HEK293 (cell line): ENCODE measurements at regions of chr20 and their contacts with region 1.

Region 1: DNA sequence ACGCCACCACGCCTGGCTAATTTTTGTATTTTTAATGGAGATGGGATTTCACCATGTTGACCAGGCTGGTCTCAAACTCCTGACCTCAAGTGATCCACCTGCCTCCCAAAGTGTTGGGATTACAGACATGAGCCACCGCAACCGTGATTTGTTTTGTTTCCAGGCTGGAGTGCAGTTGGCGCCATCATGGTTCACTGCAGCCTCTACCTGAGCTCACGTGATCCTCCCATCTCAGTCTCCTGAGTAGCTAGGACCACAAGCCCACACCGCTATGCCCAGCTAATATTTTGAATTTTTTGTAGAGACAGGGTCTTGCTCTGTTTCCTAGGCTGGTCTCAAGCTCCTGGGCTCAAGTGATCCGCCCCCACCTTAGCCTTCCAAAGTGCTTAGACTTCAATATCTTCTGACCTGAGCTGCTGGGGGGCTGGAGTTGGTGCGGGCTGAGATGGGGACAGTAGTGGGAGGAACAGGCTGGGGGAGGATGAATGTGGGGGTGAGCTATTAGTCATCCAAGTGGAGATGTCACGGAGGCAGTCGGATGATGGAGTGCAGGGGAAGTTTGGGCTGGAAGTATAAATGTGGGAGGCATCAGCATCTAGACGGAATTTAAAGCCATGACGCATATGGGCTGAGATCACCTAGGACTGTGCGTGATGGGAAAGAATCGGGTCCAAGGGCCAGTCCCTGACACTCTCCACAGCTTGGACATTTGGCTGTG is 23.1 kb upstream of the ZMYND8 start:
- H3K4me3 ChIP-seq: no peak overlapping the region
- H3K27ac ChIP-seq: no peak overlapping the region
- H3K4me1 ChIP-seq: no peaks in the 10 kb centered on the region
- CTCF ChIP-seq: no peak

Region 2: GRCh38 chr20:47196091-47197081 is 183.2 kb before region 1 on chr20:
- CTCF ChIA-PET with region 1: interaction called, 60 read pairs
- POLR2A ChIA-PET with region 1: no interaction called
- H3K4me3 ChIP-seq: no peak overlapping the region
- H3K27ac ChIP-seq: no peak overlapping the region
- H3K4me1 ChIP-seq: no peaks in the 10 kb centered on the region
- CTCF ChIP-seq: peak; percentile 80

Region 3: DNA sequence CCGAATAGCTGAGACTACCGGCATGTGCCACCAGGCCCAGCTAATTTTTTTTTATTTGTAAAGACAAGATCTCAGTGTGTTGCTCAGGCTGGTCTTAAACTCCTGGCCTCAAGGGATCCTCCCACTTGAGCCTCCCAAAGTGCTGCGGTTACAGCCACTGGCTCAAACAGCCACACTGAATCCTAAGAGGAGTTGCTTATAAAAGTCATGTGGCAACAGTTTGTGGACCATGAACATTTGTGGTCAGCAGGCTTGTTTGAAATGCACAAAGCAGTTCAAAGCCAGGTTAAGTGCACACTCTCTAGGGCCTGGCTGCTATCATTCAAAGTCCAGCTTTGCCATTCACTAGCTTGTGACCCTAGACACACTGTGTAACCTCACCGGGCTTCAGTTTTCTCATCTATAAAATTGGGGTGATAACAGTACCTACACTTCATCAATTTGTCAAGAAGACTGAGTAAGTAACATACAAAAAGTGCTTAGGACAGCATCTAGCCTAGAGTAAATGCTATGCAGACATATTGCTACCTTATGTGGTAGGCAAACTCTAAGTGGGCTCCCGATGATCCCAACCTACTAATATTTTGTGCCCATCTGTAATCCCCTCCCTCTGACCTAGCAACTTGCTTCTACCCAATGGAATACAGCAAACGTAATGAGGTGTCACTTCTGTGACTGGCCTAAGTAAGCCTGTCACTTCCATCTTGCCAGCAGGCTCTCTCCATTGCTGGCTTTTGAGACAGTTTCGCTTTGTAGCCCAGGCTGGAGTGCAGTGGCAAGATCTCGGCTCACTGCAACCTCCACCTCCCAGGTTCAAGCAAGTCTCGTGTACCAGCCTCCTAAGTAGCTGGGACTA is 146.0 kb before region 1 on chr20:
- CTCF ChIA-PET with region 1: interaction called, 13 read pairs
- POLR2A ChIA-PET with region 1: interaction called, 4 read pairs
- H3K4me3 ChIP-seq: no peak overlapping the region
- H3K27ac ChIP-seq: no peak overlapping the region
- H3K4me1 ChIP-seq: no peaks in the 10 kb centered on the region
- CTCF ChIP-seq: no peak

Region 4: GRCh38 chr20:47272893-47273590 is 106.5 kb before region 1 on chr20:
- CTCF ChIA-PET with region 1: interaction called, 355 read pairs
- POLR2A ChIA-PET with region 1: interaction called, 4 read pairs
- H3K4me3 ChIP-seq: no peak overlapping the region
- H3K27ac ChIP-seq: no peak overlapping the region
- H3K4me1 ChIP-seq: peaks cover 3% of the 10 kb centered on the region
- CTCF ChIP-seq: peak; percentile 58

Region 5: GRCh38 chr20:47321120-47321805 is 58.3 kb before region 1 on chr20:
- CTCF ChIA-PET with region 1: interaction called, 15 read pairs
- POLR2A ChIA-PET with region 1: no interaction called
- H3K4me3 ChIP-seq: no peak overlapping the region
- H3K27ac ChIP-seq: no peak overlapping the region
- H3K4me1 ChIP-seq: peaks cover 15% of the 10 kb centered on the region
- CTCF ChIP-seq: no peak

Region 6: DNA sequence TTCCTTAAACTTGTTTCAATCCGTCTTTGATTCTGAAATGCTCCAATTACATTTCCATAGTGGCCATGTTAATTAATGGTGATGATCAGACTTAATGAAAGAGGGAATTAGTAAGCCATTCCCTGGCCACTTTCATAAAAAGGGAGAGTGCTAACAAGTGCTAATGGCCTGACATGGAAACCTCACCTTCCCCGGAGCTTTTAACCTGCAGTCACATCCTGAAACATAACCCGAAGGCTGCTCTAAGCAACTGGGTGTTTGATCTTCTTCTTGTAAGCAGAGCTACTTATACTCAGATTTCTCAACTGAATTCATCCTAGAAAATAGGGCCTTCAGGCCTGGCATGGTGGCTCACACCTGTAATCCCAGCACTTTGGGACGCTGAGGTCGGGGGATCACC is 44.0 kb after region 1 on chr20:
- CTCF ChIA-PET with region 1: interaction called, 14 read pairs
- POLR2A ChIA-PET with region 1: no interaction called
- H3K4me3 ChIP-seq: no peak overlapping the region
- H3K27ac ChIP-seq: no peak overlapping the region
- H3K4me1 ChIP-seq: no peaks in the 10 kb centered on the region
- CTCF ChIP-seq: no peak